OCI-LY7 (cell line): ENCODE measurements at regions of chr7 and their contacts with region 1.

Region 1: DNA sequence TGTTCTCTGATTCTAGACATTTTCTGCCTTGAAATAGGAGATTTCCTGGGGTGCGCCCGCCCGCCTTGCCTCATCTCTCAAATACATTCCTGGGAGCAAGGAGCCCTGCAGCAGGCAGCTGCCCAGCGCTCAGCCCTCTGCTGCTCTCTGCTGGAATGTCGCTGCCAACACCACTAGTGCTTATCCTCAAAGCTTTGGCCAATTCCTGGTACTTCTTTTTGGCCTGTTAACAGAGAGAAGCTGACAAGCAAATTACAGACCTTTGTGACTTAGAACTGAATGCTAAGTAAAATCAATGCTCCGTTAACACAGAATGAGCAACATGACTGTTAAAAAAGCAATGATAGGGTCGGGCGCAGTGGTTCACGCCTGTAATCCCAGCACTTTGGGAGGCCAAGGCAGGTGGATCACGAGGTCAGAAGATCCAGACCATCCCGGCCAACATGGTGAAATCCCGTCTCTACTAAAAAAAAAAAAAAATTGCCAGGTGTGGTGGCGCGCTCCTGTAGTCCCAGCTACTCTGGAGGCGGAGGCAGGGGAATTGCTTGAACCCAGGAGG is 41.9 kb upstream of the SYPL1 start:
- DNase-seq: peak; percentile 89
- H3K4me3 ChIP-seq: no peak overlapping the region
- H3K27ac ChIP-seq: peak overlapping the region; percentile 15
- H3K4me1 ChIP-seq: peaks cover 59% of the 10 kb centered on the region
- CTCF ChIP-seq: peak; percentile 99

Region 2: GRCh38 chr7:104943502-104944343 is 1210.2 kb before region 1 on chr7:
- CTCF ChIA-PET with region 1: no interaction called
- POLR2A ChIA-PET with region 1: no interaction called
- intact Hi-C with region 1: loop called (anchors 5 kb)
- DNase-seq: peak; percentile 88
- H3K4me3 ChIP-seq: peak overlapping the region; percentile 65
- H3K27ac ChIP-seq: peak overlapping the region; percentile 96
- H3K4me1 ChIP-seq: peaks cover 86% of the 10 kb centered on the region
- CTCF ChIP-seq: no peak

Region 3: GRCh38 chr7:105934572-105935185 is 219.3 kb before region 1 on chr7:
- CTCF ChIA-PET with region 1: no interaction called
- POLR2A ChIA-PET with region 1: no interaction called
- intact Hi-C with region 1: loop called (anchors 2 kb)
- DNase-seq: peak; percentile 55
- H3K4me3 ChIP-seq: no peak overlapping the region
- H3K27ac ChIP-seq: no peak overlapping the region
- H3K4me1 ChIP-seq: no peaks in the 10 kb centered on the region
- CTCF ChIP-seq: peak; percentile 72

Region 4: GRCh38 chr7:106050011-106050745 is 103.8 kb before region 1 on chr7:
- CTCF ChIA-PET with region 1: interaction called, 46 read pairs
- POLR2A ChIA-PET with region 1: interaction called, 104 read pairs
- intact Hi-C with region 1: loop called (anchors 2 kb)
- DNase-seq: no peak
- H3K4me3 ChIP-seq: no peak overlapping the region
- H3K27ac ChIP-seq: no peak overlapping the region
- H3K4me1 ChIP-seq: peaks cover 56% of the 10 kb centered on the region
- CTCF ChIP-seq: peak; percentile 56

Region 5: GRCh38 chr7:106071356-106071998 is 82.5 kb before region 1 on chr7:
- CTCF ChIA-PET with region 1: interaction called, 8 read pairs
- POLR2A ChIA-PET with region 1: interaction called, 133 read pairs
- intact Hi-C with region 1: loop called (anchors 1 kb)
- DNase-seq: peak; percentile 96
- H3K4me3 ChIP-seq: peak overlapping the region; percentile 70
- H3K27ac ChIP-seq: peak overlapping the region; percentile 96
- H3K4me1 ChIP-seq: peaks cover 98% of the 10 kb centered on the region
- CTCF ChIP-seq: no peak

Region 6: GRCh38 chr7:106112117-106112971 is 41.6 kb before region 1 on chr7 and contains the start of gene SYPL1:
- CTCF ChIA-PET with region 1: interaction called, 8 read pairs
- POLR2A ChIA-PET with region 1: interaction called, 35 read pairs
- intact Hi-C with region 1: loop called (anchors 1 kb)
- DNase-seq: peak; percentile 96
- H3K4me3 ChIP-seq: peak within 1 kb of the TSS; percentile 80
- H3K27ac ChIP-seq: peak within 1 kb of the TSS; percentile 83
- H3K4me1 ChIP-seq: peaks cover 62% of the 10 kb centered on the region
- CTCF ChIP-seq: peak; percentile 52; the same call in 1 of the 2 replicates
- total RNA-seq, gene SYPL1: 30.4 and 34.1 TPM in 2 replicates

Region 7: DNA sequence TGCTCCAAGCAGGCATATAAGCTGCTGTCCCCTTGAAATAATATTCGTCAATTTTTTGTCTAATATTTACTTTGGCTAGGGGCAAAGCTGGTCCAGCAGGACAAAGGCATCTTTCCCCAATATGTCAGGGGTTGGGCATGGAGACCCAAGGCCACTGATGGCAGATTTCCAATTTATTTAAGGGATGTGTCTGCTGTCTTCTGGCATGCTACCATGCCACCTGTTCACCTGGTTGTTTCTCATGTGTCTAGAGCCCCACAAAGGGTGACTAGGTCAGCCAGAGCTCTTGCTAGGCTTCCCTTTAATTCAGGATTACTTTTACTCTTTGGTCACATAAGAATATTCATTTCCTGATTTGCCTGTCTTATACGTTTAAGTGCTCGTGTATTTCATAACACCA is 19.7 kb before region 1 on chr7:
- CTCF ChIA-PET with region 1: no interaction called
- POLR2A ChIA-PET with region 1: interaction called, 11 read pairs
- intact Hi-C with region 1: no loop called
- DNase-seq: no peak
- H3K4me3 ChIP-seq: no peak overlapping the region
- H3K27ac ChIP-seq: no peak overlapping the region
- H3K4me1 ChIP-seq: peaks cover 6% of the 10 kb centered on the region
- CTCF ChIP-seq: no peak